ENCODE measurements at regions of chr21 and their contacts with region 1.

Region 1: GRCh38 chr21:28737674-28738419 is 254.8 kb downstream of the LTN1 start:
- DNase-seq: peak; percentile 30
- H3K4me3 ChIP-seq: no peak overlapping the region
- H3K27ac ChIP-seq: no peak overlapping the region
- H3K4me1 ChIP-seq: peaks cover 18% of the 10 kb centered on the region
- H3K27me3 ChIP-seq: no peaks in the 10 kb centered on the region
- CTCF ChIP-seq: no peak

Region 2: GRCh38 chr21:28522014-28522799 is 215.6 kb before region 1 on chr21:
- CTCF ChIA-PET with region 1: no interaction called
- dilution Hi-C with region 1: no loop called
- in situ Hi-C with region 1: loop called (anchors 10 kb)
- intact Hi-C with region 1: no loop called
- DNase-seq: no peak
- H3K4me3 ChIP-seq: no peak overlapping the region
- H3K27ac ChIP-seq: no peak overlapping the region
- H3K4me1 ChIP-seq: peaks cover 3% of the 10 kb centered on the region
- H3K27me3 ChIP-seq: no peaks in the 10 kb centered on the region
- CTCF ChIP-seq: peak; percentile 45 to 57

Region 3: DNA sequence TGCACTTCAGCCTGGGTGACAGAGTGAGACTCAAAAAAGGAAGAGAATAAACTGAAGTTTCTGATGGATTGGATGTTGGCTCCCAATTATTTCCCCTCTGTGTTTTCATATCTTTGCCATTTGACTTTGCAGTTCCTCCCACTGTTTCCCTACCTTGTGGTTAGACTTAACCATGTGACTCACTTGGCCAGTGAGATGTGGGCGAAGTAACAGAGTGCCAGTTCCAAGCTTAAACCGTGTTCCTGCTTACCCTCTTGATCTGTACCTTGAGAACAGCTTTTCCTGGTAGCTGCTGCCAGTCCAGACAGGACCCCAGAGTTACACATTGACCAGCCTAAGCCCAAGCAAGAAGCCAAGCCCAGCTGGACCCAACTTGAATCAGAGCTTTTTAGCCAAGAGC is 68.5 kb before region 1 on chr21:
- CTCF ChIA-PET with region 1: no interaction called
- dilution Hi-C with region 1: no loop called
- in situ Hi-C with region 1: no loop called
- intact Hi-C with region 1: loop called (anchors 10 kb)
- DNase-seq: peak; percentile 25
- H3K4me3 ChIP-seq: no peak overlapping the region
- H3K27ac ChIP-seq: no peak overlapping the region
- H3K4me1 ChIP-seq: peaks cover 7% of the 10 kb centered on the region
- H3K27me3 ChIP-seq: no peaks in the 10 kb centered on the region
- CTCF ChIP-seq: no peak

Measured in mammary epithelial cell (primary cell).